ENCODE measurements at regions of chr7 and their contacts with region 1.

Region 1: DNA sequence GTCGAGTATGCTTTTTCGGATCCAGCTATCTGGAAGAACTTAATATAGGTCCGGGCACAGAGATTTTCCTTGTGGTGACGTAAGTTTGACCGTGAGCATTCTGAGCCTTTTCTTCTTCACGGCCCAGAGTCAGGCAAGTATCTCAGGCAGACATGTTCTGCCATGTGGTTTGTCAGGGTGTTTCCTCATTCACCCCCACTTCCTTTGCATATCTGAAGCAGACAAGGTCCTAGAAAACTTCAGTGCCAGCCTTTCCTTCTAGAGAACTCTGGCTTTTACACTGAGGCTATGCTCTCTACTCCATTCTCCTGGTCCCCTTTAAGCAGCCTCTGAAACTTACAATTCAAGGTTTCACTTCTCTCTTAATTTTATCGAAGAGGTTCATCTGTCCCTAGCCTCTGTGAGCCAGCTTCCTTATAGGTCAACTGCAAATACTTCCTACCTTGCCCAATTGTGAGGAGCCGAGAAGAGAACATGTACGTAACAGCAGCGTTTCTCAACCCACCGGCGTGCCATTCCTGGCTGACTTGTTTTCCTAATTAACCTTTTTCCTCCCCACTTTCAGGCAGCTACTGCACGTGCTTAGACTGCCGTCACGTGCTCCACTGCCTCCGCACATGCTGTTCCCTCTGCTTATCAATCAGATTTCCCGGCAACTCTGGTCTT is 47.3 kb downstream of the CDCA7L start:
- DNase-seq: no peak
- H3K4me3 ChIP-seq: no peak overlapping the region
- H3K27ac ChIP-seq: no peak overlapping the region
- H3K4me1 ChIP-seq: no peaks in the 10 kb centered on the region
- H3K27me3 ChIP-seq: no peaks in the 10 kb centered on the region
- CTCF ChIP-seq: no peak
- POLR2A ChIP-seq: no peak

Region 2: GRCh38 chr7:20980668-20981264 is 917.6 kb before region 1 on chr7:
- intact Hi-C with region 1: loop called (anchors 5 kb)
- DNase-seq: no peak
- H3K4me3 ChIP-seq: no peak overlapping the region
- H3K27ac ChIP-seq: no peak overlapping the region
- H3K4me1 ChIP-seq: no peaks in the 10 kb centered on the region
- H3K27me3 ChIP-seq: no peaks in the 10 kb centered on the region
- CTCF ChIP-seq: no peak
- POLR2A ChIP-seq: no peak

Region 3: GRCh38 chr7:21828846-21829245 is 69.6 kb before region 1 on chr7:
- intact Hi-C with region 1: no loop called
- DNase-seq: no peak
- H3K4me3 ChIP-seq: no peak overlapping the region
- H3K27ac ChIP-seq: no peak overlapping the region
- H3K4me1 ChIP-seq: no peaks in the 10 kb centered on the region
- H3K27me3 ChIP-seq: no peaks in the 10 kb centered on the region
- CTCF ChIP-seq: no peak
- POLR2A ChIP-seq: no peak

Region 4: GRCh38 chr7:22980422-22980821 is 1082.0 kb after region 1 on chr7:
- intact Hi-C with region 1: loop called (anchors 5 kb)
- DNase-seq: no peak
- H3K4me3 ChIP-seq: no peak overlapping the region
- H3K27ac ChIP-seq: peak overlapping the region in 1 of 2 donors; percentile 64
- H3K4me1 ChIP-seq: no peaks in the 10 kb centered on the region
- H3K27me3 ChIP-seq: no peaks in the 10 kb centered on the region
- CTCF ChIP-seq: no peak
- POLR2A ChIP-seq: no peak

Measured in breast epithelium (tissue), 4 donors.